CD4-positive, alpha-beta T cell (primary cell): ENCODE measurements at regions of chr7 and their contacts with region 1.

Region 1: GRCh38 chr7:131188367-131189339 is 139.0 kb upstream of the MKLN1 start:
- DNase-seq: peak; percentile 16 to 91 (median 40)
- ATAC-seq: peak; percentile 86
- H3K4me3 ChIP-seq: no peak overlapping the region
- H3K4me3 Mint-ChIP-seq: peak overlapping the region; percentile 23
- H3K27ac ChIP-seq: peak overlapping the region in 1 of 2 donors; percentile 74
- H3K27ac Mint-ChIP-seq: peak overlapping the region; percentile 78
- H3K4me1 ChIP-seq: peaks cover 32% of the 10 kb centered on the region
- H3K4me1 Mint-ChIP-seq: peaks cover 28% of the 10 kb centered on the region
- H3K27me3 ChIP-seq: no peaks in the 10 kb centered on the region
- H3K27me3 Mint-ChIP-seq: no peaks in the 10 kb centered on the region
- CTCF ChIP-seq: no peak

Region 2: DNA sequence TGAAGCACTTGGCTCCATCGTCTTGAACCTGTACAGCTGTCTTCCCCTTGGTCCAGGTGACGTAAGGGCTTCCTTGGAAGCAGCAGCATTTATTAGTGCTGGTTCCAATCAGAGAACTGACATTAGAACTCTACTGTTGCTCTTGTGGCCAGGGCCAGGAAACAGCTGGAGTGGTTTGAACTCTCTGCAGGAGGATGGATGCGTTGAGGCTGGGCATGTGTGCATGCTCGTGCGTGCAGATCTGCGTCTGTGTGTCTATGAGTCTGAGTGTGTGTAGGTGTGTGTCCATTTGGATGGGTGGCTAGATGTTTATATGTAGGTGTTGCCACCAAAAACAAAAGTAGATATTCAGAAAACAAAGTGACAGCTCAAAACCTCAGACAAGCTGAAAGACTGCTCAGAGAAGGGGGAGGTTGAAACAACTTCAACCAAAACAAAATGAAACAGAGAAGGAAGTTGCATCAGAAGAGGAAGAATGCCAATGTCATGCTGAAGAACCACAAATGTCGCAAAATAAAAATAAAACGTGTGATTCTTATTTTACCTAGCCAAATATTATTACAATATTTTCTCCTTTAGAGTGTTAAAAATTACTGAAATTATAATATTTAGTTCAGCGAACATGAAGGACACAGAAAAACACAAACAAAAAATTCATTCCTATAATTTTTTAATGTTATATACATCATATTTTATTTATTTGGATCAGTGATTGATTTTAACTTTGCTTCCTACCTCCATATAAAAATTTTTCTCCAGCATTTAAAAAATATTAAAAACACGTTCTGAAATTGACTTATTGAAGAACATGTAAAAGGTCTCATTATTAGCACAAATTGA is 42.9 kb after region 1 on chr7:
- CTCF ChIA-PET with region 1: interaction called, 5 read pairs
- POLR2A ChIA-PET with region 1: interaction called, 5 read pairs
- intact Hi-C with region 1: loop called in 1 of 2 experiments (anchors 1 kb)
- DNase-seq: peak; percentile 36 to 85 (median 55)
- ATAC-seq: peak; percentile 76
- H3K4me3 ChIP-seq: peak overlapping the region; percentile 38
- H3K4me3 Mint-ChIP-seq: peak overlapping the region; percentile 69
- H3K27ac ChIP-seq: peak overlapping the region; percentile 59 to 62
- H3K27ac Mint-ChIP-seq: peak overlapping the region; percentile 82
- H3K4me1 ChIP-seq: peaks cover 32% of the 10 kb centered on the region
- H3K4me1 Mint-ChIP-seq: peaks cover 37% of the 10 kb centered on the region
- H3K27me3 ChIP-seq: no peaks in the 10 kb centered on the region
- H3K27me3 Mint-ChIP-seq: no peaks in the 10 kb centered on the region
- CTCF ChIP-seq: no peak